B cell (primary cell): ENCODE measurements at regions of chr18 and their contacts with region 1.

Region 1: DNA sequence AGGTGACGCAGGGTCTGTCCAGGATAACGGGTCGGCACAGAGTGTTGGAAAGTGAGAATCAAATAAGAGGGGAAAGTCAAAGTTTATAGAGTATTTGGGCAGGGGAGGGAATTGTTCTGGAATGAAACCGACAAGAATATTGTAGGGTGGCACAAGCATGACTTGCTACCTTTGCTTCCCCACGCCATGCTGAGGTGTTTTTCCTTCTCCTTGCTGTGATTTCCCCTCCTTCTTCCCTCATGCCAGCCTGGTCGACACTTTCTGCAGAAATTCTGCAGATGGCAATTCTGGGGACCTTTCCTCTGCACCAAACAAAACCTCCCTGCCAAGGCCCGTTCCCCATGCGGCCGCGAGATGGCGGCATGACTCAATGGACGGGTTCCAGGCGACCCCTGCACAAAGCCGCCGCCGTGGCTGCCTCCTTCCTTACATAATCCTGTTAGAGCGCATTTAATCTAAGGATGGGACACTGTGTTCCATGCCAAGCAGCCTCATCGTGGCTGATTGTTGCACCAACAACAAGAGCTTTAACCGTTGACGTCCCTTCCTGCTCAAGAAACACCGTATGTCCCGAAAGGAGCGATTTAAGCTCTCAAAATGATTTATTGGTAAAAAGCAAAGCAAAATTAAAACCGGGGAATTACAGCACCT is at the start of gene MRO:
- DNase-seq: peak; percentile 84
- ATAC-seq: peak; percentile 83
- H3K4me3 ChIP-seq: peak within 1 kb of the TSS; percentile 20 to 60 (median 53)
- H3K4me3 Mint-ChIP-seq: peak within 1 kb of the TSS; percentile 17
- H3K27ac ChIP-seq: no peak within 1 kb of the TSS
- H3K27ac Mint-ChIP-seq: no peak within 1 kb of the TSS
- H3K4me1 ChIP-seq: peaks cover 44 to 47% of the 10 kb centered on the region in 2 donors
- H3K4me1 Mint-ChIP-seq: peaks cover 22% of the 10 kb centered on the region
- H3K27me3 ChIP-seq: no peaks in the 10 kb centered on the region
- H3K27me3 Mint-ChIP-seq: no peaks in the 10 kb centered on the region
- CTCF ChIP-seq: peak; percentile 97
- total RNA-seq, gene MRO: not detected in 2 replicates

Region 2: DNA sequence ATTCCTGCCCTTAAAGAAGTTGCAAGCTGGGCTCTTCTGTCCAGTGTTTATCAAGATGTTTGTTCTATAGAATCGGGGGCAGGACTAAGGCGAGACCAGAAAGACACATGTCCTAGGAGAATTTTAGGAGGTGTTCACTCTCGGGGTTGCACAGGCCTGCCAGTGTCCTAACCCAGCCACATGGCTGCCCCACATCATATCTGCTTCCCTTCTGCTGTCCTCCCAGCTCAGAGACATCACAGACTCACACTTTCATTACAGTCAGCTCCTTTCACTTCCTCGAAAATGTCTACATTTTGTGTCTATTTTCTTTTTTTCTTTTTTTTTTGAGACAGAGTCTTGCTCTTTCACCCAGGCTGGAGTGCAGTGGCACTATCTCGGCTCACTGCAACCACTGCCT is 10.7 kb after region 1 on chr18:
- CTCF ChIA-PET with region 1: interaction called, 70 read pairs
- POLR2A ChIA-PET with region 1: no interaction called
- intact Hi-C with region 1: no loop called
- DNase-seq: peak; percentile 51
- ATAC-seq: peak; percentile 65
- H3K4me3 ChIP-seq: no peak overlapping the region
- H3K4me3 Mint-ChIP-seq: peak overlapping the region; percentile 29
- H3K27ac ChIP-seq: peak overlapping the region in 1 of 2 donors; percentile 21
- H3K27ac Mint-ChIP-seq: peak overlapping the region; percentile 82
- H3K4me1 ChIP-seq: peaks cover 7 to 19% of the 10 kb centered on the region in 2 donors
- H3K4me1 Mint-ChIP-seq: peaks cover 30% of the 10 kb centered on the region
- H3K27me3 ChIP-seq: no peaks in the 10 kb centered on the region
- H3K27me3 Mint-ChIP-seq: no peaks in the 10 kb centered on the region
- CTCF ChIP-seq: no peak

Region 3: GRCh38 chr18:50866765-50867164 is 46.9 kb after region 1 on chr18:
- CTCF ChIA-PET with region 1: interaction called, 25 read pairs
- POLR2A ChIA-PET with region 1: interaction called, 3 read pairs
- intact Hi-C with region 1: loop called (anchors 1 kb)
- DNase-seq: peak; percentile 17
- ATAC-seq: no peak
- H3K4me3 ChIP-seq: no peak overlapping the region
- H3K4me3 Mint-ChIP-seq: no peak overlapping the region
- H3K27ac ChIP-seq: no peak overlapping the region
- H3K27ac Mint-ChIP-seq: no peak overlapping the region
- H3K4me1 ChIP-seq: peaks cover 11 to 12% of the 10 kb centered on the region in 2 donors
- H3K4me1 Mint-ChIP-seq: peaks cover 9% of the 10 kb centered on the region
- H3K27me3 ChIP-seq: no peaks in the 10 kb centered on the region
- H3K27me3 Mint-ChIP-seq: no peaks in the 10 kb centered on the region
- CTCF ChIP-seq: no peak

Region 4: DNA sequence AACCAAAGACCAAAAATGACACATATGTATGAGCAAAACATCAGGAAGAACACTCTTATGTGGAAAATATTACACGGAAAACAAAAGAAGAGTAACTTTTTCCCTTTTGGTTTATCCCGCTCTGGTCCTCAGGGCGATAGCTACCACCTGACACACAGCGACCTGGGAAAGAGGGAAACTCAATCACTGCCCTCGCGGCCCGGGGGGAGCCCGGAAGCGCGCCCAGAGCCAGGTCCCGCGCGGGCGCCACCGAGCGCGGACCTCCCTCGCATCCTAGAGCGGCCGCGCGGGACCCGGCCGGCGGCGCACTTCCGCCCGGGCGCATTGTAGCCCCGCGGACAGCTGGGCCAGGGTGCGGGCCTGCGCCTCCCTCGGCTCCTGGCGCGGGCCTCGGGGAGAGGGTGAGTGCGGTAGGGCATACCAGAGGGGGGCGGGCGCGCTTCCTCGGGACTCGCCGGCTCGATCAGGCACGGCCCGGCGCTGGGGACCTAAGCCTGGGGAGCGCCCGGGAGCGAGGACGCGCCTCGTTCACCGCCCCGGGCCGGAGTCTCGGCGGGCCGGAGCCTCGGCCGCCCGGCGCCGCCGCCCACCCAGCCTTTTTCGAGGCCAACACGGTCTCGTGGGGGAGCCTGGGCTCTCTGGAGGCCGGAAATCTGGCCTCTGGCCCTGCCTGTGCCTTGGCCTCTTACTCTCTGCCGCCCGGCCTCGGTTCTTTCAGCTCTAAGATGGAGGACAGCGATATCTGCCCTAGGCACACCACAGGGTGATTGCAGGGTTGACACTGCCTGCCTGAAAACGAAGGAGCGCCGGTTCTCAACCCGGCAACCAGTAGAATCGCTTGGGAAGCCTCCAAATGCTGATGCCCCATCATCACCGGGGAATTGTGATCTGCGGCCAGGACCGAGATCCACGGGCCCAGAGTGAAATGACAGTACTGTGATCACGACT is 148.1 kb after region 1 on chr18 and contains the start of gene ELAC1:
- CTCF ChIA-PET with region 1: interaction called, 6 read pairs
- POLR2A ChIA-PET with region 1: no interaction called
- intact Hi-C with region 1: loop called (anchors 5 kb)
- DNase-seq: peak; percentile 86
- ATAC-seq: peak; percentile 95
- H3K4me3 ChIP-seq: peak within 1 kb of the TSS; percentile 65 to 90 (median 82)
- H3K4me3 Mint-ChIP-seq: peak within 1 kb of the TSS; percentile 93
- H3K27ac ChIP-seq: peak within 1 kb of the TSS; percentile 80 to 95
- H3K27ac Mint-ChIP-seq: peak within 1 kb of the TSS; percentile 92
- H3K4me1 ChIP-seq: peaks cover 9 to 14% of the 10 kb centered on the region in 2 donors
- H3K4me1 Mint-ChIP-seq: peaks cover 20% of the 10 kb centered on the region
- H3K27me3 ChIP-seq: no peaks in the 10 kb centered on the region
- H3K27me3 Mint-ChIP-seq: no peaks in the 10 kb centered on the region
- CTCF ChIP-seq: no peak
- total RNA-seq, gene ELAC1: 9.9 and 10.0 TPM in 2 replicates

Region 5: DNA sequence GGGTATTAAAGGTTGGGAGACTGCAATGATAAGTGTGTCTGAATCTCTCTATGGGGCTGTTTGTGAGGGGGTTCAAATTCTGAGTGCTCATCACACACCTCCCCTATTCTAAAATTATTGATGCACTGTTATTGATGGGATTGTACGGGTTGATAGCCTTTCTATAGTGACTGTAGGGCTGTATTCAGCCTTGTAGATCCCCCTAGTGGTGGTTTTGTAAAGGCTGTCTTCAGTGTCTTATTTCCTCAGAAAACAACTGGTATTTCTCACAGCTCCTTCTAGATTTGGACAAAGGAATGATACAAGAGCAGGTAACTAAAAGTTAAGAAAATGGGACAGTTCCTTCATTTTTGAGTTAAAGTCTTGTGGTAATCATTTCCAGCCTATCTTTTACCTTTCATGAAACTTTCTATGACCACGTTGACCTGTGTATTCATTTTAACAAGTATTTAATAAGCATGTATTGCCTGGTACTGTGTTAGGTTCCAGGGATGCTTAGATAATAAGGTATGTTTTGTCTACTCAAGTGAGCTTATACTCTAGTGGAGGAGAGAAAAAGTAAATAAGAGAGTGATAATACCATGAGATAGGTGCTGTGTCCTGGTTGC is 231.4 kb after region 1 on chr18:
- CTCF ChIA-PET with region 1: interaction called, 148 read pairs
- POLR2A ChIA-PET with region 1: no interaction called
- intact Hi-C with region 1: loop called (anchors 1 kb)
- DNase-seq: peak; percentile 67
- ATAC-seq: peak; percentile 67
- H3K4me3 ChIP-seq: no peak overlapping the region
- H3K4me3 Mint-ChIP-seq: no peak overlapping the region
- H3K27ac ChIP-seq: no peak overlapping the region
- H3K27ac Mint-ChIP-seq: peak overlapping the region; percentile 67
- H3K4me1 ChIP-seq: peaks cover 0 to 7% of the 10 kb centered on the region in 2 donors
- H3K4me1 Mint-ChIP-seq: peaks cover 21% of the 10 kb centered on the region
- H3K27me3 ChIP-seq: no peaks in the 10 kb centered on the region
- H3K27me3 Mint-ChIP-seq: no peaks in the 10 kb centered on the region
- CTCF ChIP-seq: peak; percentile 85